ENCODE measurements at regions of chr3 and their contacts with region 1.

Region 1: GRCh38 chr3:185942907-185943759 is 5.3 kb upstream of the TRA2B start:
- DNase-seq: peak; percentile 91
- H3K4me3 Mint-ChIP-seq: no peak overlapping the region
- H3K27ac Mint-ChIP-seq: no peak overlapping the region
- H3K4me1 Mint-ChIP-seq: peaks cover 14% of the 10 kb centered on the region
- H3K27me3 Mint-ChIP-seq: no peaks in the 10 kb centered on the region

Region 2: GRCh38 chr3:185561374-185561943 is 381.7 kb before region 1 on chr3:
- CTCF ChIA-PET with region 1: no interaction called
- POLR2A ChIA-PET with region 1: no interaction called
- intact Hi-C with region 1: no loop called
- DNase-seq: no peak
- H3K4me3 Mint-ChIP-seq: no peak overlapping the region
- H3K27ac Mint-ChIP-seq: no peak overlapping the region
- H3K4me1 Mint-ChIP-seq: peaks cover 8% of the 10 kb centered on the region
- H3K27me3 Mint-ChIP-seq: peaks cover 5% of the 10 kb centered on the region

Region 3: DNA sequence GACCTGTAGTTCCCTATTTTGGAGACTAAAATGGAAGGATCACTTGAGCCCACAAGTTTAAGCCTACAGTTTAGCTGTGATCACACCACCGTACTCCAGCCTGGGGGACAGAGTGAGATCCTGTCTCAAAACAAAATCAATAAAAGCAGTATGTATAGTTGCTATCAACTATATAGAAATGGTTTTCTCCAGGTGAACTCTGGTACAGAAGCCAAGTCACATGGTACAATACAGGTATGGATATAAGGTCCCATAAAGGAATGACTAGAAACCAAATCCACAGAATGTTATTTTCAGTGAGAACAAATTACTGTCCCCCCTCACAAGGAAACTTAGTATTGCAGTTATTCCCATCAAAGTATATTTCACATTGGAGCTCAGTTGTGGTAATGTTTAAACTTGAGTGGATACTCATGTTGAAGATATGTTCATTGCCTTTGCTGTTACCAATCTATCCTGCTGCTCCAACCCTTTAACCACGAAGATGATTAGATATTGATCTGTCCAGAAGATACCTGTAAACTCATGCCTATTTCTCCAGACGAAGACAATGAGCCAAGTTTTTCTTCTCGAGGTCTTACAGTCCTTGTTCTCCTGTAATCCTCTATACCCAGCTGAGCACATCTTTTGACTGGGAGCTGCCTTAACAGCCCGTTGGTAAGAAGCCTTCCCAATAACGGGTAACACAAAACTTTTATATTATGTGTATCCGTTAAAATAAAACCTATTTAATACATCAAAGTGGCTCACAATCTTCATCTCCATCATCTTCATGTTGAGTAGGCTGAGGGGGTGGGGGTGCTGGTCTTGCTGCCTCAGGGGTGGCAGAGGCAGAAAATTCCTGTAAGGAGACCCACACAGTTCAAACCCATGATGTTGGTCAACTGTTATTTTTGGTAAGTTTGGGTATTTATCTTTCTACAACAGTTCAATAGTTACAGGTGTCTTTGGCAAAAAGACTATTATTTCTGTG is 29.9 kb before region 1 on chr3:
- CTCF ChIA-PET with region 1: interaction called, 11 read pairs
- POLR2A ChIA-PET with region 1: interaction called, 20 read pairs
- intact Hi-C with region 1: no loop called
- DNase-seq: no peak
- H3K4me3 Mint-ChIP-seq: no peak overlapping the region
- H3K27ac Mint-ChIP-seq: peak overlapping the region; percentile 36
- H3K4me1 Mint-ChIP-seq: no peaks in the 10 kb centered on the region
- H3K27me3 Mint-ChIP-seq: no peaks in the 10 kb centered on the region

Region 4: DNA sequence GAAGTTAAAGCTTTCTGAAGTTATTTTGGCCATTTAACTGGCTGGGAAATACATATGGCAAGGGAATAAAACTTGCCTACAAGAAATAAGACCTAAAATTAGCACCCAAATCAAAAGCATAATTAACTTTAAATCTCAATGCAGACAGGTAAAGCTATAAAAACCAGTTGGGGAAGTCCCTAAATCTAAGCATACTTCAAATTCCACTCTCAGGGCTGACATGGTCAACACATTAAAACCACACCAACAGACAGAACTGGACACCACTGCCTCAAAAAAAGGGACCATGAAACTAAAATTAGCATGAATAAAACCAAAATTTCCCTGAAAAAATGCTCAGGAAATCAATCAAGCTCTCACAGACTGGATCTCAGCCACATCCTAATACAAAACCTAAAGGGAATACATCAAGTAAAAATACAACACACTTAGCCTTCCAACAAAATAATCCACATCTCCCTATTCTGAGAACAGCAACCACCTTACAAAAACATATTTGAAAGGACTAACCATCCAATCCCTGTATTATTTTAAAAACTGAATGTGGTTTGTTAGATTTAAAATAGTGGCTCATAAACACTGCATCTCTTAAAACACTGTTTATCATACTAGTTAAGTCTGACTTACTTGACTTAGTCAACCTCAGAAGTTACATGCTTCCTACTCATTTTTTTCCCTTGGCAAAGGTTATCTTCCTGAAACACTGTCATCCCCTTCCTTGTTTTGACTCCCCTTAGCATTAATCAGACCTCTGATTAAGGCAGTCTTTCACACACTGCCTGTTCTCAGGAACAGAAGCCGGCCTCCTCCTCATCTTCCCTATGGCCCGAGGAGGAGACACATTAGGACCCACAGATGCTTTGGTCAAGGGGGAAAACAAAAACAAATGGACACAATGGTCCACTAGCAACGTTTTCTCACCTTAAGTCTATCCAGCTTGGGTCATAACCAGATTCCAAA is 13.7 kb before region 1 on chr3:
- CTCF ChIA-PET with region 1: interaction called, 34 read pairs
- POLR2A ChIA-PET with region 1: interaction called, 50 read pairs
- intact Hi-C with region 1: no loop called
- DNase-seq: no peak
- H3K4me3 Mint-ChIP-seq: peak overlapping the region; percentile 67
- H3K27ac Mint-ChIP-seq: peak overlapping the region; percentile 88
- H3K4me1 Mint-ChIP-seq: peaks cover 93% of the 10 kb centered on the region
- H3K27me3 Mint-ChIP-seq: no peaks in the 10 kb centered on the region

Region 5: GRCh38 chr3:185968168-185968567 is 25.0 kb after region 1 on chr3:
- CTCF ChIA-PET with region 1: interaction called, 31 read pairs
- POLR2A ChIA-PET with region 1: interaction called, 4 read pairs
- intact Hi-C with region 1: no loop called
- DNase-seq: no peak
- H3K4me3 Mint-ChIP-seq: no peak overlapping the region
- H3K27ac Mint-ChIP-seq: no peak overlapping the region
- H3K4me1 Mint-ChIP-seq: no peaks in the 10 kb centered on the region
- H3K27me3 Mint-ChIP-seq: peaks cover 3% of the 10 kb centered on the region

Region 6: GRCh38 chr3:185983495-185984141 is 40.5 kb after region 1 on chr3:
- CTCF ChIA-PET with region 1: interaction called, 48 read pairs
- POLR2A ChIA-PET with region 1: no interaction called
- intact Hi-C with region 1: no loop called
- DNase-seq: peak; percentile 64
- H3K4me3 Mint-ChIP-seq: no peak overlapping the region
- H3K27ac Mint-ChIP-seq: no peak overlapping the region
- H3K4me1 Mint-ChIP-seq: peaks cover 4% of the 10 kb centered on the region
- H3K27me3 Mint-ChIP-seq: peaks cover 11% of the 10 kb centered on the region

Region 7: GRCh38 chr3:186079925-186080324 is 136.8 kb after region 1 on chr3:
- CTCF ChIA-PET with region 1: no interaction called
- POLR2A ChIA-PET with region 1: no interaction called
- intact Hi-C with region 1: no loop called
- DNase-seq: no peak
- H3K4me3 Mint-ChIP-seq: no peak overlapping the region
- H3K27ac Mint-ChIP-seq: no peak overlapping the region
- H3K4me1 Mint-ChIP-seq: no peaks in the 10 kb centered on the region
- H3K27me3 Mint-ChIP-seq: peaks cover 29% of the 10 kb centered on the region

Region 8: GRCh38 chr3:186534113-186534669 is 591.1 kb after region 1 on chr3:
- CTCF ChIA-PET with region 1: interaction called, 59 read pairs
- POLR2A ChIA-PET with region 1: interaction called, 13 read pairs
- intact Hi-C with region 1: no loop called
- DNase-seq: peak; percentile 70
- H3K4me3 Mint-ChIP-seq: peak overlapping the region; percentile 46
- H3K27ac Mint-ChIP-seq: peak overlapping the region; percentile 95
- H3K4me1 Mint-ChIP-seq: peaks cover 89% of the 10 kb centered on the region
- H3K27me3 Mint-ChIP-seq: no peaks in the 10 kb centered on the region

Region 9: GRCh38 chr3:186570096-186570940 is 627.2 kb after region 1 on chr3 and contains the start of gene DNAJB11:
- CTCF ChIA-PET with region 1: interaction called, 14 read pairs
- POLR2A ChIA-PET with region 1: interaction called, 30 read pairs
- intact Hi-C with region 1: loop called (anchors 1 kb)
- DNase-seq: peak; percentile 100
- H3K4me3 Mint-ChIP-seq: peak within 1 kb of the TSS; percentile 95
- H3K27ac Mint-ChIP-seq: peak within 1 kb of the TSS; percentile 91
- H3K4me1 Mint-ChIP-seq: peaks cover 49% of the 10 kb centered on the region
- H3K27me3 Mint-ChIP-seq: no peaks in the 10 kb centered on the region
- total RNA-seq, gene DNAJB11: 36.9 to 39.5 TPM